ENCODE measurements at regions of chr3 and their contacts with region 1.

Region 1: GRCh38 chr3:189967254-189967865 is 153.3 kb downstream of the P3H2 start:
- DNase-seq: no peak
- H3K4me3 ChIP-seq: no peak overlapping the region
- H3K27ac ChIP-seq: no peak overlapping the region
- H3K27me3 ChIP-seq: no peaks in the 10 kb centered on the region
- CTCF ChIP-seq: peak; percentile 76 to 97 (median 89)

Region 2: DNA sequence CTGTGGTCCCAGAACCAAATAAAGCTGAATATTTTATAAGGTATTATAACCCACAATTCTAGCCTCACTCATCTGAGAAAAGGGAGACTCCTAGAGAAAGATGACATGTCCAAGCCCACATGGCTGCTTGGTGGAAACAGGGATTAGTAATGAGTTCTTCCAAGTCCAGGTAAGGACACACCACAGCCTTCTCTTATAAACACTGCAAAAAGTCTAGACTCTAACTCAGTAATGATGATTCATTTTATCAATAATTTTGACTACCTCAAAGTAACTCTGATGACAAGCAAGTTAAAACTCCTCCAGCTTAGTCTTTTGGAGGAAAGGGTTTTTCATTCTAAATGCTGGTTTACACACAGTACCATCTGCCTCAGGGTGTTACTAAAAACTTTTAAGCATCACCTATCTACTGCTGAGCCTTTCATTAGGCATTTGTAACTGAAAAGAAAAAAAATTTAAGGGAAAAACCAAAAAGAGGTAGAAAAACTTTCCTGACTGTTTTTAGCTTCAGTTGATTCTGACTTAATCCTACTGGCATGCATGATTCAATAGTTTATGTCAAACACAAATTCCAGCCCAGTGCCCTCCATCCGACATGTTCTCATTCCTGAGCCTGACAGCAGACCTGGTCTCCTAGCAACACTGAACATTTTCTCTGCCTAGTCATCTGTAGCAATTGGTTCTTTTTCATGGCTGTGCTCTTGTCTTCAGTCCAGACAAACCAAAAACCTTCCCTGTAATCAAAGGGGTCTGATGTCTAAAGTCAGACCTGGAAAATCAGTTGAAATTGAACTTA is 109.4 kb after region 1 on chr3:
- intact Hi-C with region 1: loop called (anchors 5 to 10 kb)
- DNase-seq: no peak
- H3K4me3 ChIP-seq: no peak overlapping the region
- H3K27ac ChIP-seq: peak overlapping the region in 3 of 59 donors; percentile 1 to 6 (median 4)
- H3K27me3 ChIP-seq: no peaks in the 10 kb centered on the region
- CTCF ChIP-seq: no peak

Region 3: DNA sequence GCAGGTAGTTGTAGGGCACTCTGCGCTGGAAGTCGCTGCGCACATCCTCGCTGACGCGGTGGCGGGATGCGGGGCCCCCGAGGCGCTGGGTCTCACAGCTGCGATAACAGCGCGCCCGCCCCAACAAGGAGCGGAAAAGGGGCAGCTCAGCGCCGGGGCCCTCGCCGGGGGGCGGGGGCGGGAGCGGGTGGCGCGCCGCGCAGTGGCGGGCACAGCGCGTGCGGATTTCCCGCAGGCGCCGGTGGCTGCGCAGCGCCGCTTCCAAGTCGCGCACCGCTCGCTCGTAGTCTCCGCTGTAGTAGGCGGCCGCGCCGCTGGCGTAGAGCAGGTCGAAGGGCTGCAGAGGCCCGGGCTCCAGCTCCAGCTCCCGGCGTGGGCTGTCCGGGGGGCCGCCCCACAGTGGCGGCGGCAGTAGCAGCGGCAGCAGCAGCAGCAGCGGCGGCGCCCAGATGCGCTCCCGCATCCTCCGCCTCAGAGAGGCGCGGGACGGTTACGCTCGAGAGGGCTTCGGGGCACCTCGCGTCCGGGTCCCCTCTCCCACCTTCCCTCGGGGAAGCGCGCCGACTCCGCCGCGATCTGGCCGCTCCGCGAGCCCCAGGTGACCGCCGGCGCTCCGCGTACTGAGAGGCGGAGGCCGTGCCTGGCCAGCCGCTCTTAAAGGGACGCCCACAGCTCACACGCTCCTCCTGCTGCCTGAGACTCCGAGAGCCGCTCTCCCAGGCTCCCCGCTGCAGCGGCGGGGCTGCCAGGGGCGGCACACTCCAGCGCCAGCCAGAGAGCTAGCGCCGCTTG is 153.1 kb after region 1 on chr3 and contains the start of gene P3H2:
- intact Hi-C with region 1: loop called in 1 of 2 experiments (anchors 5 kb)
- DNase-seq: peak; percentile 14 to 88 (median 77)
- H3K4me3 ChIP-seq: peak within 1 kb of the TSS; percentile 51 to 92 (median 79)
- H3K27ac ChIP-seq: peak within 1 kb of the TSS in 57 of 59 donors; percentile 17 to 93 (median 81)
- H3K27me3 ChIP-seq: no peaks in the 10 kb centered on the region
- CTCF ChIP-seq: peak in 51 of 56 donors; percentile 20 to 70 (median 48)
- total RNA-seq, gene P3H2: 2.9 to 14.9 (median 8.8) TPM

Region 4: DNA sequence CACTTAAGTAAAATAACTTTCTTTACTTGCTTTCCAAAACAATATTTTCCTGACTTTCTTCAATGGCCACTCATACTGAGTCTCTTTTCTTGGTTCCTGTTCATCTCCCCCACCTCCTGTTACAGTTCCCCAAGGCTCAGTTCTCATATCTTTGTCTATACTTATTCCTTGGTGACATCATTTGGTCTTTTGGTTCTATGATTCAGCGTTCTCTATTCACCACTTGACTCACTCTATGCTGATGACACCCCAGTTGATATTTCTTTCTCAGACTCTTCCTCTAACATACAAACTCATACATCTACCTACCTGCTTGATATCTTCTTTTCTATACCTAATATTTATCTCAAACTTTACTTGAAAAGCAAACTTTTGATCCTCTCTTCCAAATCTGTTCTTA is 238.4 kb after region 1 on chr3:
- intact Hi-C with region 1: loop called (anchors 2 to 5 kb)
- DNase-seq: no peak
- H3K4me3 ChIP-seq: no peak overlapping the region
- H3K27ac ChIP-seq: no peak overlapping the region
- H3K27me3 ChIP-seq: no peaks in the 10 kb centered on the region
- CTCF ChIP-seq: no peak

Region 5: GRCh38 chr3:190217081-190217480 is 249.7 kb after region 1 on chr3:
- intact Hi-C with region 1: no loop called
- DNase-seq: no peak
- H3K4me3 ChIP-seq: no peak overlapping the region
- H3K27ac ChIP-seq: no peak overlapping the region
- H3K27me3 ChIP-seq: no peaks in the 10 kb centered on the region
- CTCF ChIP-seq: no peak

Measured in dorsolateral prefrontal cortex (tissue), 120 donors.